Activated CD4-positive, alpha-beta memory T cell treated with anti-CD3 and anti-CD28 coated beads for 36 hours (primary cell): ENCODE measurements at regions of chr3 and their contacts with region 1.

Region 1: GRCh38 chr3:98556164-98557130 is 24.7 kb downstream of the GPR15 start:
- DNase-seq: peak; percentile 88
- H3K4me3 Mint-ChIP-seq: peak overlapping the region; percentile 74
- H3K27ac Mint-ChIP-seq: peak overlapping the region; percentile 98
- H3K4me1 Mint-ChIP-seq: peaks cover 80% of the 10 kb centered on the region
- H3K27me3 Mint-ChIP-seq: peaks cover 3% of the 10 kb centered on the region

Region 2: DNA sequence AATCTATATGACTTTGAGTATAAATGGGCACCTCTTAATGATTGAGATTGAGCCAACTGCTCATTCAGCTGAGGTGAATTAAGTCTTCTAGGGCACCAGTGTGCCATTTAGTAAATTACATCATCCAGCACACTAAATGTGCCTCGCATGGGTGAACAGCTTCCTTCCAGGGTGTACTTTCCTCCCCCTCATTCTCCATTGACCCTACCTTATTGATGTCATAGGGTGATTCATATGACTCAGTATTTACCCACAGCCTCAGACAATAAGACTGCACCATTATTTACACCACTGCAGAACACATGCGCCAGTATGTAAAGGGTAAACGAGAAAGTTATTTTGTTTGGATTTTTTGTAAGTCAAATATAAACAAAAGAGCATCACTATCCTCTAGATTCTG is 977.1 kb before region 1 on chr3:
- CTCF ChIA-PET with region 1: no interaction called
- POLR2A ChIA-PET with region 1: no interaction called
- intact Hi-C with region 1: no loop called
- DNase-seq: no peak
- H3K4me3 Mint-ChIP-seq: no peak overlapping the region
- H3K27ac Mint-ChIP-seq: no peak overlapping the region
- H3K4me1 Mint-ChIP-seq: no peaks in the 10 kb centered on the region
- H3K27me3 Mint-ChIP-seq: no peaks in the 10 kb centered on the region

Region 3: GRCh38 chr3:97981886-97982285 is 574.6 kb before region 1 on chr3:
- CTCF ChIA-PET with region 1: no interaction called
- POLR2A ChIA-PET with region 1: no interaction called
- intact Hi-C with region 1: loop called (anchors 5 kb)
- DNase-seq: peak; percentile 28
- H3K4me3 Mint-ChIP-seq: no peak overlapping the region
- H3K27ac Mint-ChIP-seq: peak overlapping the region; percentile 11
- H3K4me1 Mint-ChIP-seq: peaks cover 18% of the 10 kb centered on the region
- H3K27me3 Mint-ChIP-seq: no peaks in the 10 kb centered on the region

Region 4: GRCh38 chr3:98223907-98224672 is 332.4 kb before region 1 on chr3:
- CTCF ChIA-PET with region 1: no interaction called
- POLR2A ChIA-PET with region 1: no interaction called
- intact Hi-C with region 1: no loop called
- DNase-seq: no peak
- H3K4me3 Mint-ChIP-seq: no peak overlapping the region
- H3K27ac Mint-ChIP-seq: no peak overlapping the region
- H3K4me1 Mint-ChIP-seq: no peaks in the 10 kb centered on the region
- H3K27me3 Mint-ChIP-seq: peaks cover 2% of the 10 kb centered on the region

Region 5: GRCh38 chr3:98531622-98532274 is 24.7 kb before region 1 on chr3 and contains the start of gene GPR15:
- CTCF ChIA-PET with region 1: interaction called, 12 read pairs
- POLR2A ChIA-PET with region 1: interaction called, 39 read pairs
- intact Hi-C with region 1: loop called (anchors 1 kb)
- DNase-seq: no peak
- H3K4me3 Mint-ChIP-seq: peak within 1 kb of the TSS; percentile 38
- H3K27ac Mint-ChIP-seq: peak within 1 kb of the TSS; percentile 50
- H3K4me1 Mint-ChIP-seq: peaks cover 32% of the 10 kb centered on the region
- H3K27me3 Mint-ChIP-seq: no peaks in the 10 kb centered on the region
- total RNA-seq, gene GPR15: 2.8 to 3.0 TPM

Region 6: GRCh38 chr3:98545940-98546339 is 10.5 kb before region 1 on chr3:
- CTCF ChIA-PET with region 1: interaction called, 9 read pairs
- POLR2A ChIA-PET with region 1: interaction called, 7 read pairs
- intact Hi-C with region 1: loop called (anchors 1 kb)
- DNase-seq: no peak
- H3K4me3 Mint-ChIP-seq: peak overlapping the region; percentile 64
- H3K27ac Mint-ChIP-seq: peak overlapping the region; percentile 78
- H3K4me1 Mint-ChIP-seq: peaks cover 47% of the 10 kb centered on the region
- H3K27me3 Mint-ChIP-seq: no peaks in the 10 kb centered on the region

Region 7: DNA sequence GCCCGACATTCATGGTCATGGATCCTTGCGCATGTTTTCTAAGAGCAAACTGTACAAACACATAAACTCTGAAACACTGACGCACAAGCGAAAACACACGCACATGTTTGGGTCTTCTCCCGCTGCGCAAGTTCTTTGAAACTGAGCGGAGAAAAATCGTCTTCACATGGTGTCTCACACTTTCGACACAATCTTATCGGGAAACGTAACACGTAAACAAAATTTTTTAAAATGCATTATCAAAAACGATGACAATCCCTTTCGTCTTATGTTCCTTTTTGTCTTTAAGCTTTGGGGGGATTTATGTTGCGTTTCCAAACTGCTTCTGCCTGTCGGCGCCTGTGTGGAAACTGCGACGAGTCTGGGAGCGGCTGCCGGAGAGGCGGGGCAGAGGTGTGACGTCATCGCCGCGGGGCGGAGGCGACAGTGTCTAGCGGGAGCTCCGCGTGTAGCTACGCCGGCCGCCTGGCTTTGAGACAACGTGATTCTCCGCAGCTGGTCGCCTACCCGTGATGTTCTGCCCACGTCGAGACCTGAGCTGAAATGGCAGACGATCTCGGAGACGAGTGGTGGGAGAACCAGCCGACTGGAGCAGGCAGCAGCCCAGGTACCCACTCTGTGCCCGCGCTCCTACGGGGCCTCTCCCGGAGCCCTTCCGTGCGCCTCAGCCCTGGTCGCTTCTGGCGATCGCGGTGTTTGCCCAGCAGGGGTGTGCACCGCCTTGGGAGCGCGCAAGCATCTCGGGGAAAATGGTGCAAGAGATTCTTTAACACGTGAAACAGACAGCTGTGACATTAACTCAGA is 1261.2 kb after region 1 on chr3 and contains the start of gene CMSS1:
- CTCF ChIA-PET with region 1: no interaction called
- POLR2A ChIA-PET with region 1: no interaction called
- intact Hi-C with region 1: loop called (anchors 1 kb)
- DNase-seq: peak; percentile 96
- H3K4me3 Mint-ChIP-seq: peak within 1 kb of the TSS; percentile 84
- H3K27ac Mint-ChIP-seq: peak within 1 kb of the TSS; percentile 92
- H3K4me1 Mint-ChIP-seq: peaks cover 35% of the 10 kb centered on the region
- H3K27me3 Mint-ChIP-seq: no peaks in the 10 kb centered on the region
- total RNA-seq, gene CMSS1: 95.6 to 97.2 TPM